ENCODE measurements at regions of chr18 and their contacts with region 1.

Region 1: DNA sequence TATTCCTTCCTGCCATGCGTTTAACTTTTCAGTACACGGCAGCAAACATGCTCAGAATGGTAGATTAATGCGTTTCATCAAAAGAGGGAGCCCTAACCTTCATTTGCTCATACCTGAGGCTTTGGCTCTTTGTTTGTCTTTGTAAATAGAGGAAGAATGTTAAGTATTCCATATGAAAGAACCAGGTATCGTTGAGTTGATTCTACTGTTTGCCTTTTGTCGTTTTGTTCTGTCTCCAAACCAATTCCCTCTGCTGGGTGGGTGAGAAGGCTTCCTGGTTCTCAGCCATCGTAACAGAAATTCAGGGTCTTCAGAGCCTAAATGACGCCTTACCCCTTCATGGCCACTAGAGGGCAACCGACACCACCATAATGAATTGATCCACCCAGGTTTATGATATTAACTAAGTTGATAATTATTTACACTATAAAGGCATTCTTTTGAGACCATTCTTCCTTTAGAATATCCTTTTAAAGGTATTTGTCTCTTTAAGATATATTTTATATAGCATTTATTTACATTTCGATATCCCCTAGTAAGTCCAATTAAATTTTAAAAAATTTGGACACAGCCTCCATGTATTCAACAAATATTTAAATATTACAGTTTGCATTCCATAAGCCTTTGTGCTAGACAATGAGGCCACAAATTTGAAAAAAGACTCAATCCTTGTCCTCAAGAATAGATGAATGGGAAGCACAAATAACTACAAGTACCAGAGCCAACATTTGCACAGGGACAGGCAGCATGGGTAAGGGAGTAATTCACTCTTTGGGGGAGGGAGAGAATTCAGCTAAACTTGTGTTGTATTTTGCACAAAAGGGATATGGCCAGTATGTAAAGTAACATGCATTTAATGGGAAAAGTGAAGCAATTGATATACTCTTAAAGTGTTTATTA is 48.1 kb downstream of the TIMM21 start:
- DNase-seq: peak in 1 of 2 donors; percentile 64
- H3K4me3 ChIP-seq: no peak overlapping the region
- H3K27ac ChIP-seq: no peak overlapping the region
- H3K4me1 ChIP-seq: no peaks in the 10 kb centered on the region
- H3K27me3 ChIP-seq: no peaks in the 10 kb centered on the region
- CTCF ChIP-seq: peak; percentile 70 to 86 (median 70)

Region 2: DNA sequence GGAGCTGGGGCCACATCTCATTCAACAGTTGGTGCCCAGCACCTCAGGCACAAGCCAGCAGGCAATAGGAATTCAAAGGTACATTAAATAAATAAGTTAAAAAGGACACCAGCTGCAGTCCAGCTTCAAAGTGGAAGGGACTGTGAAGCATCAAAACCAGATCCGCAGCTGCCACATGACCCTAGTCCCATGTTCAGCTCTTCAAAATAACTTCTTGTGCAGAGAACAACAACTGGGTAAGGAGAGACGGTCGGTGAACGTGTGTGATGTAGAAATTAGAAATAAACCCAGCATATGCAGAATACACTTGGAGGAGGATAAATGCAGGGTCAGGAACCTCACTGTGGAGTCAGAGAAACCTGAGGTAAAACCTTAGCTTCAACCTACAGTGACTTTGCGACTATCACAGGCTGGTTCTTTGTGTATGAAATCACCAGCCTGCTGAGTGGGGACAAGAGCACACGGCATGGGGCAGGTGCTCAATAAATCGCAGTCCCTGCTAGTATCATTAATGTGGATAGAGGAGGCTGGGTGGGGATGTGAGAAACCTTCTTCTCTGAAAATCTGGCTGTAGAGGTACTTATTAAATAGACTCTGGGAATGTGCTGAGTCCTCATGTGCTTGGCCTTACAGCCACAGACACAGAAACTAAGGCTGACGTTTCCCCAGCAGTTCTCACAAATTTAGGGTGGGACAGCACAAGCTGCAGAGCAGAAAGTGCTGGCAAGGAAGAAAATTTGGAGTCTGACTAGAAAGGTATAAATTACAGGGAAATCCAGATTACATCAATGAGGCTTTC is 69.6 kb before region 1 on chr18:
- intact Hi-C with region 1: no loop called
- DNase-seq: no peak
- H3K4me3 ChIP-seq: no peak overlapping the region
- H3K27ac ChIP-seq: no peak overlapping the region
- H3K4me1 ChIP-seq: no peaks in the 10 kb centered on the region
- H3K27me3 ChIP-seq: no peaks in the 10 kb centered on the region
- CTCF ChIP-seq: no peak

Region 3: DNA sequence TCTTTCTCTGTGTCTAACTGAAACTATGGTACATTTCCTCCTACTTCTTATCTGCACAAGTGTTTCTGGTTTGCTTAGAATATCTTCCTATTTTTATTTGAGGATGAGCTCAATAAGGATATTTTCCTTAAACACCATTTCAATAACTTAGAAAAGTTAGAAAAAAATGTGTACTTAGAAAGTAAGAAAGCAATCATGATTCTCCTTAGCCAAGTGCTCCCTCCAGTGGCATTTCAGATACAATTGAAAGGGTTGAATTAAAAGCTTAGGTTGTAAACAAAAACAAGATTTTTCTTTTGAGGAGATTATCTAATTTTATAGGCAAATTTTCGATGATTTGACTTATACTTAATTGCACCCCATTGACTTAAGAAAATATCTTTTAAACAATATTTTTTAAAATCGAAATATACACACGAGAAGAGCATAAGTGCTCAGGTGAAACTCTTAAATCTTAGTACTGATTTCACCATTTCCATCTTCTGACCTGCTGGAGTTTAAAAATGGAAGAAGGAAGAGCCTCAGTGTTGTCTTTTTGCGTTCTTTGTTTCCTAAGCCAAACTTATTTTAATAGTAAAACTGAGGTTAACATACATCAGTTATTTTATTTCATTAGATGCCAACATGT is 146.1 kb after region 1 on chr18:
- intact Hi-C with region 1: loop called (anchors 2 kb)
- DNase-seq: no peak
- H3K4me3 ChIP-seq: no peak overlapping the region
- H3K27ac ChIP-seq: no peak overlapping the region
- H3K4me1 ChIP-seq: no peaks in the 10 kb centered on the region
- H3K27me3 ChIP-seq: no peaks in the 10 kb centered on the region
- CTCF ChIP-seq: peak; percentile 22 to 66 (median 45)

Region 4: GRCh38 chr18:74551936-74552555 is 355.6 kb after region 1 on chr18:
- intact Hi-C with region 1: loop called (anchors 1 kb)
- DNase-seq: peak; percentile 31 to 89
- H3K4me3 ChIP-seq: no peak overlapping the region
- H3K27ac ChIP-seq: no peak overlapping the region
- H3K4me1 ChIP-seq: no peaks in the 10 kb centered on the region
- H3K27me3 ChIP-seq: no peaks in the 10 kb centered on the region
- CTCF ChIP-seq: peak; percentile 49 to 77 (median 72)